Naive thymus-derived CD4-positive, alpha-beta T cell (primary cell): ENCODE measurements at regions of chr9 and their contacts with region 1.

Region 1: DNA sequence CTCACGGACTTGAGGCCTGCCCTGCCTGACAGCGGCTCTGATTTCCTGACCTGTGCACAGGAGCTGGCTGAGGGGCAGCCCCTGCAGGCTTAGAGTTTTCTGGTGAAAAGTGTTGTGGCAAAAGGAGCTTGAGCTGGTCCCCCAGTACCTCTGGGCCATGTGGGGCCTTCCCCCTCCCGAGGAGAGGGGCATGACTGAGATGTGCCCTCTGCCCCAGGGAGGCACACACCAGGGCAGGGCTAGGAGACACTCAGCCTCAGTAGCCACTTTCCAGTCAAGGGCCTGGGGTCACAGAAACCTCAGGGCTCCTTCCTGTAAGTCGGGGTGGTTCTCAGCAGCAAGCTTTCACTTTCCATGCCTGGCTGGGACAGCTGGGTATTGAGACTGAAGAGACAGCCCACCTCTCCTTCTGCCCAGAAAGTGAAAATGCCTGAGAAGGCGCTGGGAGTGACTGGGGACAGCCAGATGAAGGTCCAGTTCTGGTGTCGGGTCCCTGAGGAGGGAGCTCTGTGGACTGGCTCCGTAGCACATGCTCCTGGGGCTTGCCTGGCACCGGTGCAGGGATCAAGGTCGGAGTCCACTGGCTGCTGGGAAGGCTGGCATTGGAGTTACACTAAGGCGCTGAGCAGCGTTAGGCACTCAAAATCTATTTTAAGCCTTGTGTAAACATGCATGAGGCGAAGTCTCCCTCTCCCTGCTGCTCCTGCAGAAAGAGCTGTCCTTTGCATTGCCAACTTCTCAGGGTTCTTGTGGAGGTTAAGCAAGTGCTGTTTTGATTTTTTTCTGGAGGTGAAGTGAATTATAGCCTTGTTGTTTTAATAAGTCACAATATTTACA is 394.9 kb downstream of the GADD45G start:
- DNase-seq: peak in 7 of 9 donors; percentile 15 to 59 (median 36)
- ATAC-seq: peak; percentile 79
- H3K4me3 ChIP-seq: peak overlapping the region; percentile 63
- H3K4me3 Mint-ChIP-seq: peak overlapping the region; percentile 69 to 86 (median 78)
- H3K27ac ChIP-seq: peak overlapping the region; percentile 49
- H3K27ac Mint-ChIP-seq: peak overlapping the region; percentile 63 to 90 (median 83)
- H3K4me1 ChIP-seq: peaks cover 10 to 20% of the 10 kb centered on the region in 2 donors
- H3K4me1 Mint-ChIP-seq: peaks cover 20 to 43% (median 27%) of the 10 kb centered on the region in 7 donors
- H3K27me3 ChIP-seq: no peaks in the 10 kb centered on the region
- H3K27me3 Mint-ChIP-seq: peaks cover 0 to 4% (median 0%) of the 10 kb centered on the region in 5 donors

Region 2: GRCh38 chr9:89961616-89962341 is 38.0 kb before region 1 on chr9:
- CTCF ChIA-PET with region 1: no interaction called
- POLR2A ChIA-PET with region 1: no interaction called
- intact Hi-C with region 1: loop called in 1 of 2 experiments (anchors 5 kb)
- DNase-seq: peak in 4 of 9 donors; percentile 7 to 15 (median 11)
- ATAC-seq: no peak
- H3K4me3 ChIP-seq: peak overlapping the region; percentile 31
- H3K4me3 Mint-ChIP-seq: peak overlapping the region; percentile 52 to 83 (median 63)
- H3K27ac ChIP-seq: no peak overlapping the region
- H3K27ac Mint-ChIP-seq: peak overlapping the region in 8 of 9 donors; percentile 45 to 83 (median 61)
- H3K4me1 ChIP-seq: peaks cover 4 to 6% of the 10 kb centered on the region in 2 donors
- H3K4me1 Mint-ChIP-seq: peaks cover 13 to 27% (median 16%) of the 10 kb centered on the region in 7 donors
- H3K27me3 ChIP-seq: no peaks in the 10 kb centered on the region
- H3K27me3 Mint-ChIP-seq: no peaks in the 10 kb centered on the region

Region 3: GRCh38 chr9:89983411-89983810 is 16.3 kb before region 1 on chr9:
- CTCF ChIA-PET with region 1: no interaction called
- POLR2A ChIA-PET with region 1: no interaction called
- intact Hi-C with region 1: loop called in 1 of 2 experiments (anchors 2 kb)
- DNase-seq: no peak
- ATAC-seq: no peak
- H3K4me3 ChIP-seq: no peak overlapping the region
- H3K4me3 Mint-ChIP-seq: peak overlapping the region in 1 of 10 donors; percentile 13
- H3K27ac ChIP-seq: no peak overlapping the region
- H3K27ac Mint-ChIP-seq: peak overlapping the region in 1 of 9 donors; percentile 0
- H3K4me1 ChIP-seq: no peaks in the 10 kb centered on the region
- H3K4me1 Mint-ChIP-seq: peaks cover 0 to 39% (median 0%) of the 10 kb centered on the region in 7 donors
- H3K27me3 ChIP-seq: no peaks in the 10 kb centered on the region
- H3K27me3 Mint-ChIP-seq: peaks cover 5 to 21% (median 10%) of the 10 kb centered on the region in 5 donors